ENCODE measurements at regions of chr17 and their contacts with region 1.

Region 1: DNA sequence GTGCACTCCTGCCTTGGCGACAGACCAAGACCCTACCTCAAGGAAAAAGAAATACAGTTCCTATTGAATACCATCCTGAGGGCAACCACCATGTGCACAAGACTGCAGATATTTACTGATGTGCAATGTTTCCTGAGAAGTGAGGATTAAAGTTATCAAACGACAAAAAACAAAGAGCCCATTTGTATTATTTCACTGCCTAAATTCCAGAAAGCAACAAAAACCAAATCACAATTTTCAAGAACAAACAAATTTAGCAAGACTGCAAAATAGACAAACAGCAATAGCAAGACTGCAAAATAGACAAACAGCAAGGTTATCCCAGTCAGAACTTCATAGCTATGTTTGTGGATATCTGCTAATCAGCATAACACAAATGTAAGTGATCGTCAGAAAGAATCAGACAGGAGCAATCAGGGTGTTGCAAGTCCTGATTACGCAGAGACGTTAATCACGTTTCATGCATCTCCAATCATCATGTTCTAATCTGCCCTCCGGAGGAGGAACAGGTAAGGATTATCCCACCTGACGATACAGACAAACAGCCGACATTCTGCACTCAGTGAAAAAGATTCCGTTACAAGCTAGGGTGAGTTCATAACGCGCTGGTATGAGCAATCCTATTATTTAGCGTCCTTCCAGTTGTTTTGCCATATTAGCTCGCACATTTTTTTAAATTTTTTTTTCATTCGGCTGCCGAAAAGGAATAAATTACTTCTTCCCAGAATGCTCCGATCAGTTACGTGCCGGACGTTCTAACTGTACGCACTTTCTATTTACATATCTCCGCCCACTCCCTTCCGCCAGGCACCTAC is 2.9 kb downstream of the TMEM107 start:
- DNase-seq: peak; percentile 96 to 98 (median 97)
- H3K4me3 ChIP-seq: peak overlapping the region in 6 of 7 experiments; percentile 63 to 97 (median 70)
- H3K27ac ChIP-seq: peak overlapping the region; percentile 100
- H3K4me1 ChIP-seq: peaks cover 8 to 47% (median 33%) of the 10 kb centered on the region in 4 experiments
- H3K27me3 ChIP-seq: no peaks in the 10 kb centered on the region

Region 2: DNA sequence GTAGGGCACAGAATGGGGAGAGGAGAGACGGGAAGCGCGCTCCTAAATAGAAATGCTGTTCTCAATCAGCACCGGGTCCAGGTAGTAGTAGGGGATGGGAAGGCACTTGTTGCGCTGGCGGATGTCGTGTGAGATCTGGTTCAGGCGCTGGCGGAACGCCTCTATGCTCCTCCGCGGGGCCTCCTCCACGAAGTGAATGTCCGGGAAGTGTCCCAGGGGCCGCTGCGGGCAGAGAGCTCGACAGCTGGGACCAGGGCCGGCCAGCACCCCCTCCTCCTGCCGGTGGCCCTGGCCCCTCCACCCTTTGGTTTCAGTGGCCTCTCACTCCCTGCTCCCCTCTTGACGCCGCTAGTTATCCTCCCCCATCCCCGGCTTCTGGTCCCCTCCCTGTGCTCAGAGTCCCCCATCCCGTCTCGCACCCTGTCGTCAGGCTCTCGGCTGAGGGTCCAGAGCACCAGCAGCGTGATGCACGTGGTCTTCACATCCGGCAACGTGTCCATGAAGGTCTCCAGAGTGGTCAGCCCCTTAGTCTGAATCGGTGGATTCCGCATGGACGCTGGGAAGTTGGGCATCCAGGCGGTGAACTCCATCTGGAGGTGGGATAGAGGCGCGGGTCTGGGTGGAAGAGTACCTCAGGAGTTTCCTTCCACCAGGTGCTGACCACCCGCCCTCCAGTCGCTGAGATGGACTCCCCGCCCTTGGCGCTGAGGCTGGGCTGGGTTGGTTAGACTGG is 100.4 kb before region 1 on chr17:
- CTCF ChIA-PET with region 1: no interaction called
- POLR2A ChIA-PET with region 1: no interaction called
- DNase-seq: peak in 1 of 3 donors; percentile 36
- H3K4me3 ChIP-seq: peak overlapping the region in 4 of 7 experiments; percentile 10 to 63 (median 54)
- H3K27ac ChIP-seq: no peak overlapping the region
- H3K4me1 ChIP-seq: peaks cover 0 to 21% (median 17%) of the 10 kb centered on the region in 4 experiments
- H3K27me3 ChIP-seq: peaks cover 0 to 49% (median 33%) of the 10 kb centered on the region in 5 experiments

Region 3: GRCh38 chr17:8138672-8139371 is 34.4 kb before region 1 on chr17:
- CTCF ChIA-PET with region 1: interaction called, 8 read pairs
- POLR2A ChIA-PET with region 1: interaction called, 17 read pairs
- DNase-seq: peak; percentile 94 to 97 (median 97)
- H3K4me3 ChIP-seq: peak overlapping the region; percentile 33 to 81 (median 72)
- H3K27ac ChIP-seq: peak overlapping the region; percentile 40 to 80
- H3K4me1 ChIP-seq: peaks cover 5 to 23% (median 20%) of the 10 kb centered on the region in 4 experiments
- H3K27me3 ChIP-seq: no peaks in the 10 kb centered on the region

Region 4: GRCh38 chr17:8156246-8156992 is 16.8 kb before region 1 on chr17:
- CTCF ChIA-PET with region 1: interaction called, 5 read pairs
- POLR2A ChIA-PET with region 1: interaction called, 44 read pairs
- DNase-seq: peak; percentile 100
- H3K4me3 ChIP-seq: peak overlapping the region; percentile 61 to 88 (median 73)
- H3K27ac ChIP-seq: peak overlapping the region; percentile 91 to 96
- H3K4me1 ChIP-seq: peaks cover 15 to 68% (median 65%) of the 10 kb centered on the region in 4 experiments
- H3K27me3 ChIP-seq: no peaks in the 10 kb centered on the region

Region 5: DNA sequence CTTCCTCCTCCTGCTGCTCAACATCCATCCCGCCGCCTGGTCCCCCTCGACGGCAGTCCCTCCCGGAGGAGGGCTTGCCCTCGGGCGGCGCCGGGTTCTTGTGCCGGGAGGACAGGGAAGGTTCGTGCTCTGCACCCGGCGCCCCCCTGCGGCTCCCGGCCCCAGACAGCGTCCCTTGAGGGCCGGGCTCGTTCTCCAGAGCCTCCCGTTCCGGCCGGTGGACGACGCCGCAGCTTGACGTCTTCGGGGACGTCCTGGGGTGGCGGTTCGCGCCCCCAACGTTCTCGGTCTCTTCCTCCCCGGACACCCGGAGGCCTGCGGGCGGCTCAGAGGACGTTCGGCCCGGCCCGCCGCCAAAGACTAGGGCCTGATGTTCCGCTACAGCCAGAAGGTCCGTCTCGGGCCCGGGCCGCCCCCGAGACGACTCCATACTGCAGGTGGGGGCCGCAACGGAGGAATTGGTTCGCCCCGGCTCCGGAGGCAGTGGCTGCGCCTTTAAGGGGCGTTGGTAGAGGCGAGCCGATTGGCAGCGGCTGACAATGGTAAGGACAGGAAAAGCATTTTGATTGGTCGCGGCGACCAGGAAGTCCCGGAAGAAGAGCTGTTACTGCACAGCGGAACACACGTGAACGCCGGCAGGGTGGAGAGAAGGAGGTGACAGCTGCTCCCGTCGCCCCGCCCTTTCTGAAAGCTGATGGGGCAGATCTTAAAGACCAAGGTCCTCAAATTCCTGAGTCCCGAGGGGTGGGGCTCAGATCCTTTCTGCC is 16.6 kb after region 1 on chr17 and contains the start of gene BORCS6:
- CTCF ChIA-PET with region 1: interaction called, 6 read pairs
- POLR2A ChIA-PET with region 1: interaction called, 47 read pairs
- DNase-seq: peak; percentile 97 to 99 (median 98)
- H3K4me3 ChIP-seq: peak within 1 kb of the TSS; percentile 75 to 92 (median 80)
- H3K27ac ChIP-seq: peak within 1 kb of the TSS in 1 of 2 experiments; percentile 81
- H3K4me1 ChIP-seq: peaks cover 15 to 53% (median 46%) of the 10 kb centered on the region in 4 experiments
- H3K27me3 ChIP-seq: no peaks in the 10 kb centered on the region

Region 6: DNA sequence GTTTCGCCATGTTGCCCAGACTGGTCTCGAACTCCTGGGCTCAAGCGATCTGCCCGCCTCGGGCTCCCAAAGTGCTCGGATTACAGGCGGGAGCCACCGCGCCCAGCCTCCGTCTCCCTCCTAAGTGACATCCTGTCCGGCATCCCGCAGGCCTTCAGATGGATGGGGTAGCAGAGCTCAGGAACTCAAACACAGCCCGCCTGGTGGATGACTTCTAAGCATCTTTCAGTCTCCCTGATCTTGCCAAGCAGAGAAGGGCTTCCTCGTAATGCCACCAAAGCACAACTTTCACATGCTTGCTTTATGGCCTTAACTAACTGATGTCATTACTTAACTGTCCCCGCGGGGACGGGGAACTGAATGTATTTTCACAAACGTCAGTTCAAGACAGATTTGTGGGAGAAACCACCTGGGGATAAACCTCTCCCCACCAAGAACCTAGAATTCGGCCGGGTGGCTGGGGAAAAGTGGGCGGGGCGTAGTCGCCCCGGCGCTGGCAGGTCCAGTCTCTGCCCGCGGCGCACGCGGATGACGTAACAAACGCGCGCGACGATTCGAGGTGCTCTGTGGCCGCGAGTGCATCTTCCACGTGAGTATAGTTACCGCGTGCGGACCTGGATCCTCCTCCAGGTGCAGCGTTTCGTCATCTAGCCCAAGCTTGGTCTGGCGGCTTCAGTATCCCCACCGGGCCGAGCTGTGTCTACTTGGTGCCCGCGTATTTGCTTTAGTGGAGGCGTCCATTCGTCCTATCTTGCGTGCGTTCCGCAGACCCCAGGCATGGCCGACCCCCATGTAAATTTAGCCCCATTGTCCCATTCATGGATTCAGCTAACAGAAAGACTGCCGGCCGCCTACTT is 75.7 kb after region 1 on chr17 and contains the start of gene PFAS:
- CTCF ChIA-PET with region 1: no interaction called
- POLR2A ChIA-PET with region 1: interaction called, 12 read pairs
- DNase-seq: peak; percentile 95 to 97 (median 97)
- H3K4me3 ChIP-seq: peak within 1 kb of the TSS; percentile 91 to 99 (median 95)
- H3K27ac ChIP-seq: peak within 1 kb of the TSS; percentile 98
- H3K4me1 ChIP-seq: peaks cover 8 to 26% (median 22%) of the 10 kb centered on the region in 4 experiments
- H3K27me3 ChIP-seq: no peaks in the 10 kb centered on the region

Region 7: GRCh38 chr17:8315764-8316217 is 142.5 kb after region 1 on chr17:
- CTCF ChIA-PET with region 1: no interaction called
- POLR2A ChIA-PET with region 1: no interaction called
- DNase-seq: no peak
- H3K4me3 ChIP-seq: no peak overlapping the region
- H3K27ac ChIP-seq: no peak overlapping the region
- H3K4me1 ChIP-seq: no peaks in the 10 kb centered on the region
- H3K27me3 ChIP-seq: peaks cover 0 to 1% (median 0%) of the 10 kb centered on the region in 5 experiments